Thyroid gland (tissue), 4 donors: ENCODE measurements at regions of chr3 and their contacts with region 1.

Region 1: DNA sequence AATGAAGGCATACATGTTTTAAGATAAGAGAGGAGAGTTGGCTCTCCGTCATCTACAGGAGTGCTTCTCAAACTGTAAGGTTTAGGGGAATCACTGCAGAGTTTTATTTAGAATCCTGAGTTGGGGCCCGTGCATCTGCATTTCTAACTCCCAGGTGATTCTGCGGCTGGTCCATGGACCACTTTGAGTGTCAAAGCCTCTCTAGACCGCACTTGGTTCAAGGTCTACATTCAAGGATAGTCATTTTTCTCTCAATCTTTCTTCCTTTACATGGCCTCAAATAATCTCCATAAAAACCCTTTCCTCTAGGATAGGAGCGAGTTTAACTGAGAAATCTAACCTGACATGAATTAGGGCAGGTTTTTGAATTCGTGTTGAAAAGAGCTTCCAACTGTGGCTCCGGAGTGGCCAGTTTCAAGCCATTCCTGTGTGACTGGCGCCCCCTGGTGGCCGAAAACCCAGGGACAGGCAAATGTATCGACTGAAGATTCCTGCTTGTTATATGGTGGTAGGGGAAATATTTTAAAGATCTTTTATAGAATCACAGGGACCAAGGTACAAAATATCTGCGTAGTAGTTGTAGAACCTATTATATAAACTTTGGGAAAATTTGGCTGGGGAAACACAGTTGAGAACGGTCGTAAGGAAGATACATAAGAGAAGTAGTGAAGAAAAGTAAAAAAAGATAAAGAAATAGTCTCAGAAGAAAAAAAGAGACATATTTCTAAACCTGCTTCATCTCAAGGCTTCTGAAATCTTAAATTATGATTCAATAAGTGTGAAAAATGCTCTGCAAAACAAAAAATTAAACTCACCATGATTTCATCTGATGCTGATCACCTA is 11.9 kb downstream of the GABRR3 start:
- DNase-seq: peak; percentile 91 to 95
- H3K4me3 ChIP-seq: no peak overlapping the region
- H3K27ac ChIP-seq: no peak overlapping the region
- H3K4me1 ChIP-seq: peaks cover 6 to 12% of the 10 kb centered on the region in 2 donors
- H3K27me3 ChIP-seq: no peaks in the 10 kb centered on the region
- CTCF ChIP-seq: peak; percentile 91 to 98 (median 94)
- POLR2A ChIP-seq: no peak

Region 2: DNA sequence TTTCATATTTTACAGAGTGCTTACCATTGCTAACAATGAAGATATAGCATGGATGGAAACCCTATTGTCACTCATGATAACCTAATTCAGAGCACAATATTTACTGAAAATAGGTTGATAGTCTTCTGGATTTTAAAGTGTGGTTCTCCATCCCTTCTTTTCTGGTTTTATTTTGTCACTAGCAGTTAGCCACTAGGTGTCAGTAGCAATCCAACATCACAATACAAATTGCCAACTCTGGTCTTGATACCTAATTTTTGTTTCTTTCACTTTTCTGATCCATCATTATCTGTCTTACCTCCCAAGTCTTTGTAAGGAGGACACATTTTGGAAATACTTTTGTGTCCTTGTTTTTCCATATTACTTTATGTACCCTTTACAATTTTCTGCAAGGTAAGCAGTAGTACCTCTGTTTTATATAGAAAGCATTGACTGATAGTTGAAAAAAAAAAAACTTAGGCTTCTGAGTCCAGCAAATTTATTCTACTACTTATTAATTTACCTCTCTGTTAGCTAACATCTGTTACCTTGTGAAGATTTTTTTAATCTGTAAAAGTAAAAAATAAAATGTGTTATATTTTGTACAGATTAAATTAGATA is 229.7 kb before region 1 on chr3:
- intact Hi-C with region 1: loop called (anchors 5 kb)
- DNase-seq: no peak
- H3K4me3 ChIP-seq: no peak overlapping the region
- H3K27ac ChIP-seq: no peak overlapping the region
- H3K4me1 ChIP-seq: no peaks in the 10 kb centered on the region
- H3K27me3 ChIP-seq: no peaks in the 10 kb centered on the region
- CTCF ChIP-seq: peak; percentile 65 to 96 (median 78)
- POLR2A ChIP-seq: no peak